Spleen (tissue), 13 donors: ENCODE measurements at regions of chrX and their contacts with region 1.

Region 1: DNA sequence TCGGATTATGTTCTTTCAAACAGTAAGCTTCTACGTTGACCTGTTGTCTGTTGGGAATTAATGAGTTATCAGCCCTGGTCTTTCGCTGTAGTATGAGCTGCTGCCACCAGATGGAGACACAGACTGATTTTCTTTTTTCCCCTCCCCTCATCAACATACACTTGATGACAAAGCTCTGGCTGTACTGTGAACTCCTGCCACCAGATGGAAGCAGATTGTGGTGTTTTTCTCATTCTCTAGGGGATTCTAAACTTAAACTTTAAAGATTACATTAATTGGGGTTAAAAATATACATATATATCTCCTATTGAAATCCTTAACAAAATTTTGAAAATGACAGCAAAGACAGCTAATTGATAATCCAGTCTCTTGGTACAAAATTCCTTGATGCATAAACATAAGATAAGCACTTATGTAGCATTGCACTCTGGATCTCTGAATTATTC is 44.8 kb downstream of the SMS start:
- DNase-seq: no peak
- H3K4me3 ChIP-seq: no peak overlapping the region
- H3K27ac ChIP-seq: peak overlapping the region in 2 of 8 donors; percentile 28 to 36
- H3K4me1 ChIP-seq: peaks cover 0 to 6% (median 0%) of the 10 kb centered on the region in 6 donors
- H3K27me3 ChIP-seq: no peaks in the 10 kb centered on the region
- CTCF ChIP-seq: peak; percentile 86 to 99 (median 92)
- POLR2A ChIP-seq: no peak

Region 2: GRCh38 chrX:22748093-22748999 is 763.0 kb after region 1 on chrX:
- intact Hi-C with region 1: loop called (anchors 10 kb)
- DNase-seq: no peak
- H3K4me3 ChIP-seq: no peak overlapping the region
- H3K27ac ChIP-seq: no peak overlapping the region
- H3K4me1 ChIP-seq: no peaks in the 10 kb centered on the region
- H3K27me3 ChIP-seq: no peaks in the 10 kb centered on the region
- CTCF ChIP-seq: peak in 10 of 11 experiments; percentile 15 to 73 (median 66)
- POLR2A ChIP-seq: no peak